B cell (primary cell): ENCODE measurements at regions of chr17 and their contacts with region 1.

Region 1: DNA sequence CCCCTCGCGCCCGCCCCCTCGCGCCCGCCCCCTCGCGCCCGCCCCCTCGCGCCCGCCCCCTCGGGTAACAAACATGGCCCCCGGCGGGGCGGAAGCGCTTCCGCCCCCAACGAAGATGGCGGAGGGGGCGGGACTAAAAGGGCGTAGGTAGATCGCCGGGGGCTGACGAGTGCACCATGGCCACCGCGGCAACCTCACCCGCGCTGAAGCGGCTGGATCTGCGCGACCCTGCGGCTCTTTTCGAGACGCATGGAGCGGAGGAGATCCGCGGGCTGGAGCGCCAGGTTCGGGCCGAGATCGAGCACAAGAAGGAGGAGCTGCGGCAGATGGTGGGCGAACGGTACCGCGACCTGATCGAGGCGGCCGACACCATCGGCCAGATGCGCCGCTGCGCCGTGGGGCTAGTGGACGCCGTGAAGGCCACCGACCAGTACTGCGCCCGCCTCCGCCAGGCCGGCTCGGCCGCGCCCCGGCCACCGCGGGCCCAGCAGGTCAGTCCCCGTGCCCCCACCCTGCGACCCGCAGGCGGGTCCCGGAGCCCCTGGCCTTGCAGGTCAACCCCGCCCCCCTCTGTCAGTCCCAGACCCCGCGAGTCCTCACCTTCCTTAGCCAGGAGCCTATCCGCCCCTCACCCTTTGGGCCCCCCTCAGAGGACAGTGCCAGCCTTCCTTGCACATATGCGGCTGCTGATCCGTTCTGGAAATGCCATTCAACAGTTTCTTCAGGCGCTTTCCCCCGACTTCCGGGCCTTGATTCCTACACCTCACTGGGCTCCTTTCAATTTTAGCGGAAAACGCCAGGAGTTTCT is at the start of gene COG1:
- DNase-seq: peak; percentile 94
- ATAC-seq: peak; percentile 88
- H3K4me3 ChIP-seq: peak within 1 kb of the TSS; percentile 63 to 94 (median 85)
- H3K4me3 Mint-ChIP-seq: peak within 1 kb of the TSS; percentile 96
- H3K27ac ChIP-seq: peak within 1 kb of the TSS; percentile 72 to 77
- H3K27ac Mint-ChIP-seq: peak within 1 kb of the TSS; percentile 93
- H3K4me1 ChIP-seq: peaks cover 11 to 21% of the 10 kb centered on the region in 2 donors
- H3K4me1 Mint-ChIP-seq: peaks cover 27% of the 10 kb centered on the region
- H3K27me3 ChIP-seq: no peaks in the 10 kb centered on the region
- H3K27me3 Mint-ChIP-seq: no peaks in the 10 kb centered on the region
- CTCF ChIP-seq: no peak
- total RNA-seq, gene COG1: 64.7 and 72.8 TPM in 2 replicates

Region 2: DNA sequence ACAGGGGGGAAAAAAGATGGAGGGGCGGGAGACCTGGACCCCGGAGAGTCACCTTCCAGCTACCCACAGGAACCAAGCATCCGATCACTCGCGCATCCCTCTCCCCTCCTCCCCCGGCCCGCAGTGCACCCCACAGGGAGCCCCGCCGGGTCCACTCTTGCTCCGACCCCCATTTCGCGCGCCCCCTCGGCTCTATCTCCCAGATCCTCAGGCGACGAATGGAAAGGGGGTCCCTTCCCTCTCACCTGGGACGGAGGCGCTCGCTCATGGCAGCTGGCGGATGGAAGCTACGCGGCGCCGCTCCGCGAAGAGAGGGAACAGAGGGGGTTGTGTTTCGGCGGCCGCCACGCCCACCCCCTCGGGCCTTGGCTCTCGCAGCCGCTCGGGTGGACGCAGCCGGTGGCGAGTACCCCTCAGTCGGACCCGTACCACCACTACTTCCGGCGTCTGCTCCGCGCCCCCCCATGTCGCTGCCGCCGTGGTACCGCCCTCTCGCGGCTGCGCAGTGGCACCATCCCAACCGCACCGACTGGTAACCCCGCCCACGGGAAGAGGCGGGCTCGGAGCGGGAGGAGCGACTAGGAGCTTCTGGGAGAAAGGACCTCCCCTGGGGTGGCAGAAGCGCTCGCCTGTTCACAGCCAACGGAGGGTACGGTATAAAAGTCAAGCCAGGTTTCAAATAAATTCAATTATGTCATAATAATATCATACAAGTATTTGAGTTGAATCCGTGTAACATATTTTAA is 38.9 kb after region 1 on chr17:
- CTCF ChIA-PET with region 1: interaction called, 13 read pairs
- POLR2A ChIA-PET with region 1: interaction called, 4 read pairs
- intact Hi-C with region 1: loop called (anchors 1 kb)
- DNase-seq: peak; percentile 96
- ATAC-seq: peak; percentile 96
- H3K4me3 ChIP-seq: peak overlapping the region; percentile 81 to 96 (median 87)
- H3K4me3 Mint-ChIP-seq: peak overlapping the region; percentile 98
- H3K27ac ChIP-seq: peak overlapping the region; percentile 46 to 83
- H3K27ac Mint-ChIP-seq: peak overlapping the region; percentile 98
- H3K4me1 ChIP-seq: peaks cover 15 to 29% of the 10 kb centered on the region in 2 donors
- H3K4me1 Mint-ChIP-seq: peaks cover 55% of the 10 kb centered on the region
- H3K27me3 ChIP-seq: no peaks in the 10 kb centered on the region
- H3K27me3 Mint-ChIP-seq: no peaks in the 10 kb centered on the region
- CTCF ChIP-seq: no peak

Region 3: GRCh38 chr17:74203439-74204240 is 1010.5 kb after region 1 on chr17 and contains the start of gene RPL38:
- CTCF ChIA-PET with region 1: no interaction called
- POLR2A ChIA-PET with region 1: no interaction called
- intact Hi-C with region 1: loop called (anchors 2 kb)
- DNase-seq: peak; percentile 96
- ATAC-seq: peak; percentile 98
- H3K4me3 ChIP-seq: peak within 1 kb of the TSS; percentile 90 to 94 (median 91)
- H3K4me3 Mint-ChIP-seq: peak within 1 kb of the TSS; percentile 98
- H3K27ac ChIP-seq: peak within 1 kb of the TSS; percentile 70 to 85
- H3K27ac Mint-ChIP-seq: peak within 1 kb of the TSS; percentile 94
- H3K4me1 ChIP-seq: peaks cover 34 to 40% of the 10 kb centered on the region in 2 donors
- H3K4me1 Mint-ChIP-seq: peaks cover 33% of the 10 kb centered on the region
- H3K27me3 ChIP-seq: peaks cover 0 to 40% (median 8%) of the 10 kb centered on the region in 4 experiments
- H3K27me3 Mint-ChIP-seq: peaks cover 29% of the 10 kb centered on the region
- CTCF ChIP-seq: peak; percentile 84
- total RNA-seq, gene RPL38: 1,416 and 1,550 TPM in 2 replicates